Dorsolateral prefrontal cortex (tissue), 120 donors: ENCODE measurements at regions of chr17 and their contacts with region 1.

Region 1: GRCh38 chr17:44324571-44325275 is at the start of gene SLC25A39:
- DNase-seq: peak; percentile 88 to 98 (median 92)
- H3K4me3 ChIP-seq: peak within 1 kb of the TSS; percentile 68 to 100 (median 97)
- H3K27ac ChIP-seq: peak within 1 kb of the TSS; percentile 32 to 93 (median 83)
- H3K27me3 ChIP-seq: no peaks in the 10 kb centered on the region
- CTCF ChIP-seq: peak in 23 of 56 donors; percentile 7 to 56 (median 16)
- total RNA-seq, gene SLC25A39: 42.3 to 102 (median 61.2) TPM

Region 2: DNA sequence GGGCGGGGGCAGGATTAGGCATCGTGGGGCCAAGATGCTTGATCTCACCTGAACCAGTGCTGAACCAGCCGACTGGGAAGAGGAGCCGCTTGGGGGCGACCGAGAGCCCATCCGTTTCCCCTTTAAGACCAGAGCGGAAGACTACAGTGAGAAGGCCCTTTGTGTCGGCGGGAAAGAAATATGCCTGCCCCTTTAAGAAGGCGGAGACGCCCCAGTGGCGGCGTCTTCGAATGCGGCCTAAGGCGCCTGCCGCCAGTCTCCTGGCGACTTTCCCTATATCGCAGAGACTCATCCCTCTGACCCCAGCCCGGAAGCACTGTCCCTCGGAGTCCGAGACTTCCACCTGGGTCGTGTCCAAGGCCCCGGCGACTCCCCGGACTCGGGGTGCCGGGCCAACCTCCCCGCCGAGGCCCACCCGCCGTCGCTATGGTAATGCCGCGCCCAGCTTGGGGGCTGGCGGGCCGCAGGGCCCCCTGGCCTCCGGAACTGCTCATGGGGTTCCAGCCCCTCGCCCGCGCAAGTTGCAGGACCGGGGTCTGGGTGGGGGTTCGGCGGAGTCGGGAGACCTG is 182.9 kb before region 1 on chr17 and contains the start of gene HROB:
- intact Hi-C with region 1: loop called in 1 of 2 experiments (anchors 5 kb)
- DNase-seq: peak; percentile 95 to 98 (median 96)
- H3K4me3 ChIP-seq: peak within 1 kb of the TSS; percentile 49 to 96 (median 74)
- H3K27ac ChIP-seq: peak within 1 kb of the TSS in 3 of 59 donors; percentile 15 to 66 (median 63)
- H3K27me3 ChIP-seq: no peaks in the 10 kb centered on the region
- CTCF ChIP-seq: peak; percentile 57 to 98 (median 92)
- total RNA-seq, gene HROB: 0.19 to 2.8 (median 0.78) TPM in 109 of 120 experiments, not detected in the others

Region 3: DNA sequence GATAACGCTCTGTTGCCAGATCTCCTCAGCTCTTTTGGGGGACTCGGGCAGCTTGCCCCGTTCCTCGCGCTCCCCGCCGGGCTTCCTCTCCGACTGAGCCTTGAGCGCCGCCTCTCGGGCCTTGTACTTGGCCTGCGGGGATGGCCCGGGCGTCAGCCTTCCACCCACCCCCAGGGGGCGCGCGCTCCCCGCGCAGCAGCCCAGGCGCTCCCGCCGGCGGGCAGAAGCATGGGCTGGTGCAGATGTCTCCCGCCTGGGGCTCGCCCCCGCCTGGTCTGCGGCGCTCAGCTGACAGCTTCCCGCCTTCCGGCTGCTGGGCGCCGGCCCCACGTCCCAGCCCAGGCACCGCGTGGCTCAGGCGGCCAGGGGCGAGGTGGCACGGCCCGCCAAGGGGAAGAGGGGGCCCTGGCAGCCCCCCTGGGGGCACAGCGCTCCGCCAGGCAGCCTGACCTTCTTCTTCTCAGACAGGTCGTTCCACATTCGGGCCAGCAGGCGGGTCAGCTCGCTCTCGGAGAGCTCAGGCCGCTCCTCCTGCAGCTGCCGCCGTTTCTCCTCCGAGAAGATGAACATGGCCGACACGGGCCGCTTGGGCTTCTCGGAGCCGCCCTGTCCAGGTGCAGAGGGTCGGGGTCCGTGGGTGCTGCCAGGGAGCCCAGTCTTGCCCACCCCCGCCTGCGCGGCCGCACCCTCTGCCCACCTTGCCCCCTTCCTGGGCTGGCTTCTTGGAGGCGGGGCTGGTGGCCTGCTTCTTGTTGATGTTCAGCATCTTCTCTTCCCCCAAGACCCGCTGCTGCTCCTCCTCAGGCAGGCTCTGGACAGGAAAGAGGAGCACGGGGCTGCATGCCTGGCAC is 114.2 kb before region 1 on chr17:
- intact Hi-C with region 1: loop called in 1 of 2 experiments (anchors 2 kb)
- DNase-seq: peak; percentile 81 to 94 (median 88)
- H3K4me3 ChIP-seq: peak overlapping the region in 45 of 59 donors; percentile 0 to 49 (median 22)
- H3K27ac ChIP-seq: peak overlapping the region; percentile 63 to 95 (median 86)
- H3K27me3 ChIP-seq: no peaks in the 10 kb centered on the region
- CTCF ChIP-seq: peak; percentile 89 to 100 (median 99)

Region 4: GRCh38 chr17:44218344-44219107 is 106.2 kb before region 1 on chr17:
- intact Hi-C with region 1: loop called (anchors 1 kb)
- DNase-seq: peak; percentile 68 to 91 (median 82)
- H3K4me3 ChIP-seq: peak overlapping the region; percentile 46 to 95 (median 88)
- H3K27ac ChIP-seq: peak overlapping the region; percentile 71 to 100 (median 99)
- H3K27me3 ChIP-seq: no peaks in the 10 kb centered on the region
- CTCF ChIP-seq: peak; percentile 31 to 83 (median 68)

Region 5: GRCh38 chr17:44344939-44345453 is 20.3 kb after region 1 on chr17 and contains the start of gene GRN:
- intact Hi-C with region 1: loop called in 1 of 2 experiments (anchors 2 kb)
- DNase-seq: peak; percentile 89 to 99 (median 97)
- H3K4me3 ChIP-seq: peak within 1 kb of the TSS; percentile 57 to 98 (median 86)
- H3K27ac ChIP-seq: peak within 1 kb of the TSS; percentile 59 to 95 (median 89)
- H3K27me3 ChIP-seq: no peaks in the 10 kb centered on the region
- CTCF ChIP-seq: peak in 20 of 56 donors; percentile 5 to 60 (median 24)
- total RNA-seq, gene GRN: 42.3 to 110 (median 70.1) TPM

Region 6: GRCh38 chr17:44417553-44417952 is 92.8 kb after region 1 on chr17:
- intact Hi-C with region 1: no loop called
- DNase-seq: peak in 1 of 10 donors; percentile 31
- H3K4me3 ChIP-seq: no peak overlapping the region
- H3K27ac ChIP-seq: peak overlapping the region in 4 of 59 donors; percentile 2 to 36 (median 30)
- H3K27me3 ChIP-seq: no peaks in the 10 kb centered on the region
- CTCF ChIP-seq: no peak